Gastrocnemius medialis (tissue), 4 donors: ENCODE measurements at regions of chr15 and their contacts with region 1.

Region 1: GRCh38 chr15:47987908-47988532 is 132.8 kb upstream of the SLC24A5 start:
- DNase-seq: no peak
- ATAC-seq: peak; percentile 86 to 89
- H3K4me3 ChIP-seq: no peak overlapping the region
- H3K27ac ChIP-seq: no peak overlapping the region
- H3K4me1 ChIP-seq: no peaks in the 10 kb centered on the region
- H3K27me3 ChIP-seq: no peaks in the 10 kb centered on the region
- CTCF ChIP-seq: peak; percentile 51 to 78 (median 66)
- POLR2A ChIP-seq: no peak

Region 2: GRCh38 chr15:47443839-47444238 is 544.2 kb before region 1 on chr15:
- in situ Hi-C with region 1: no loop called
- intact Hi-C with region 1: no loop called
- DNase-seq: no peak
- ATAC-seq: no peak
- H3K4me3 ChIP-seq: no peak overlapping the region
- H3K27ac ChIP-seq: no peak overlapping the region
- H3K4me1 ChIP-seq: peaks cover 0 to 8% of the 10 kb centered on the region in 2 donors
- H3K27me3 ChIP-seq: no peaks in the 10 kb centered on the region
- CTCF ChIP-seq: no peak
- POLR2A ChIP-seq: no peak

Region 3: DNA sequence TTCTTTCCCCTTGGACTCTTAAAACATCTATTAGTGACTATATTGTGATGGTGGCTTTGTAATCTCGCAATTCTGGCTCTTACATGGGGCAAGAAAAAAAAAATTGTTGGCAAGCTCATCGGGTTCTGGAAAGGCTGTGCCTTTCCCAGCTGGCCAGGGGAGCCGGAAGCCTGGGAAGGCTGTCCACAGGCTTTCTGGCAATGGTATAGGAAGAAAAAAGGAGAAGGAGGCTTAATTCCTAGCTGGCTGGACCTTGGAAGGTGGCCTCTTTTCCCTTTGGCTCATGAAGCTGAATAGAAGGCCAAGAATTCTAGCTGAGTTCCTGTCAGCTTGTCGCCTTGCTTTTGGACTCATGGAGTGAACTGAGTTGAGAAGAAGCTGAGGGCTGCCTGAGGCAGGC is 514.2 kb before region 1 on chr15:
- in situ Hi-C with region 1: loop called in 2 of 4 experiments (anchors 25 kb)
- intact Hi-C with region 1: loop called (anchors 2 kb)
- DNase-seq: peak in 1 of 2 donors; percentile 40
- ATAC-seq: peak; percentile 64 to 76
- H3K4me3 ChIP-seq: no peak overlapping the region
- H3K27ac ChIP-seq: no peak overlapping the region
- H3K4me1 ChIP-seq: peaks cover 9 to 20% of the 10 kb centered on the region in 2 donors
- H3K27me3 ChIP-seq: no peaks in the 10 kb centered on the region
- CTCF ChIP-seq: no peak
- POLR2A ChIP-seq: no peak

Region 4: GRCh38 chr15:47484059-47484458 is 504.0 kb before region 1 on chr15:
- in situ Hi-C with region 1: loop called in 2 of 4 experiments (anchors 10 to 25 kb)
- intact Hi-C with region 1: no loop called
- DNase-seq: no peak
- ATAC-seq: no peak
- H3K4me3 ChIP-seq: no peak overlapping the region
- H3K27ac ChIP-seq: no peak overlapping the region
- H3K4me1 ChIP-seq: no peaks in the 10 kb centered on the region
- H3K27me3 ChIP-seq: no peaks in the 10 kb centered on the region
- CTCF ChIP-seq: no peak
- POLR2A ChIP-seq: no peak

Region 5: GRCh38 chr15:47514211-47514652 is 473.8 kb before region 1 on chr15:
- in situ Hi-C with region 1: no loop called
- intact Hi-C with region 1: no loop called
- DNase-seq: no peak
- ATAC-seq: no peak
- H3K4me3 ChIP-seq: no peak overlapping the region
- H3K27ac ChIP-seq: no peak overlapping the region
- H3K4me1 ChIP-seq: no peaks in the 10 kb centered on the region
- H3K27me3 ChIP-seq: no peaks in the 10 kb centered on the region
- CTCF ChIP-seq: no peak
- POLR2A ChIP-seq: no peak

Region 6: DNA sequence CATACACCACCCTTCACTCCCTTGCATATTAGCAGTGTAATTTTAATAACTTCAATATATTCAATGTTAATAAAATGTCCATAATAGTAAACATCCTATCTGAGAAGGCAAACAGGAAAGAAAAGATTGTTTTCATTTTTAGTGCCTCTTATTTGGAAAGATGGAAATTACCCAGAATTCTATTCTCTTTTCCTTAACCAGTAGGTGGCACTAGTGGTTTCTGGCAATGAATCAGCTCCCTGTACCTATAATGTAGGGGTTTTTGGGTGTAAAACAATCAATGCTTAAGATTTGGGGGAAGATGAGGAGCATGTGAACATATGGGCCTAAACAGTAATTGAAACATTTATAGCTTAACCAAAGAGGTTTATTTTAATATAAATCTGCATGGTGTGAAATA is 276.4 kb before region 1 on chr15:
- in situ Hi-C with region 1: loop called (anchors 5 to 25 kb)
- intact Hi-C with region 1: loop called (anchors 1 kb)
- DNase-seq: no peak
- ATAC-seq: no peak
- H3K4me3 ChIP-seq: no peak overlapping the region
- H3K27ac ChIP-seq: no peak overlapping the region
- H3K4me1 ChIP-seq: peaks cover 3 to 4% of the 10 kb centered on the region in 2 donors
- H3K27me3 ChIP-seq: no peaks in the 10 kb centered on the region
- CTCF ChIP-seq: peak; percentile 31 to 66 (median 40)
- POLR2A ChIP-seq: no peak

Region 7: DNA sequence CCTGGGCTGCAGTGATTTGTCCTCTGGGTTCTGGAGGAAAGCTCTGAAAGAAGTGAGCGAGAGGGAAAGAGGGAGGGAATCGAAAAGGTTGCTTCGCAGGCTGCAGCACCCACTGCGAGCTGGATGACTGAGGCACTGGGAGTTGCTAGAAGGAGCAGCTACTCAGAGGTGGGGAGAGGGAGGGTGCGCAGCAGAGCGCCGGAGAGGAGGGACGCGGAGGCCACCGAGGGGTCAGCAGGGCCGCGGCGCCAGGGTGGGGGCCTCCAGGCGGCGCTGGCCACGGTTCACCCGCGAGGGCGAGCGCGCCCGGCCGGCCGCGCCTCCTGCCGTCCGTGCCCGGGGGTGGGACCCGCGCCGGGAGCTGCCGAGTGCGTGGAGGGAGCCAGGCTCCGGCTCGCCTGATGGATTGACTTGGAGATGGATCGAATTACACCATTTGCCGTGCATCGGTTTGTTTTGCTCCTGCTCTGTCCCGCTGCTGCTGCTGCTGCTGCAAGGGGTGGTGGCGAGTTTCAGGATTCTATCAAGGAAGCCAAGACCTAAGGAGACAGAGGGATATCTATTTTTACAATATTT is 270.9 kb before region 1 on chr15 and contains the start of gene SEMA6D:
- in situ Hi-C with region 1: loop called in 2 of 4 experiments (anchors 25 kb)
- intact Hi-C with region 1: loop called (anchors 1 kb)
- DNase-seq: peak; percentile 79 to 80
- ATAC-seq: peak; percentile 69 to 77
- H3K4me3 ChIP-seq: peak within 1 kb of the TSS; percentile 77 to 89 (median 85)
- H3K27ac ChIP-seq: peak within 1 kb of the TSS; percentile 88 to 96 (median 94)
- H3K4me1 ChIP-seq: peaks cover 32% of the 10 kb centered on the region in 2 donors
- H3K27me3 ChIP-seq: no peaks in the 10 kb centered on the region
- CTCF ChIP-seq: peak in 4 of 5 experiments; percentile 39 to 66 (median 52)
- POLR2A ChIP-seq: peak; percentile 12 to 29
- total RNA-seq, gene SEMA6D: 0.97 to 5.9 (median 2.7) TPM